GM18951 (cell line): ENCODE measurements at regions of chr17 and their contacts with region 1.

Region 1: GRCh38 chr17:34199932-34200534 is 55.1 kb upstream of the CCL2 start:
- POLR2A ChIP-seq: no peak

Region 2: DNA sequence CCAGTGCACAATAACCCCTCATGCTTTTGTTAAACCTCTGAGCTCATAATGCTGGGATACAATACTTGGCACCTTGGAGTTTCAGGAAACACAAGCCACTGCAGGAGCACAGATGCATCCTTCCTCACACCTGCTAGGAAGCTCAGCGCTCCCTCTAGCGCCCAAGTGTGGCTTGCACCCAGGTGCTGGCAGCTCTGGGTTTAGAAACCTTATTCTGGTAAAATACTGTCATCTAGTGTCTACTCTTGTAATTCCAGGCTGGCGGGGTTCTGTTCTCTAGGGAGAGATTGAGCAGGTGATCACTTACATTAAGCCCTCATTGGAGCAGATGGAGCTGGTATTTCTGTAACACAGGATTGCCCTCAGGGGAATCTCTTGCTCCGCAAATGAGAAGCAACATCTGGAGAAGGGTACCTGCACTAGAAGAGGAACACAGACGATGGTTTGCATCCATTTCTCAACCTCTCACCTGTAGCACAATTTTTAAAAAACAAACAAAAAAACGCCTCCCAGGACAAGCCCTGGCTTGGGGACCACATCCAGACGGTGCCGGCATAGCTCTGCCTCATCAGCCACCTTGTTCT is 161.5 kb after region 1 on chr17:
- in situ Hi-C with region 1: loop called (anchors 5 kb)
- POLR2A ChIP-seq: no peak